Activated B cell treated with CpG ODN at 0.5 μM for 24 hours (primary cell): ENCODE measurements at regions of chr19 and their contacts with region 1.

Region 1: GRCh38 chr19:42132851-42133528 is 744 bp upstream of the POU2F2 start:
- DNase-seq: peak; percentile 97
- ATAC-seq: peak; percentile 27
- H3K4me3 Mint-ChIP-seq: peak overlapping the region; percentile 95
- H3K27ac Mint-ChIP-seq: peak overlapping the region; percentile 90
- H3K4me1 Mint-ChIP-seq: peaks cover 60% of the 10 kb centered on the region
- H3K27me3 Mint-ChIP-seq: no peaks in the 10 kb centered on the region
- CTCF ChIP-seq: no peak

Region 2: DNA sequence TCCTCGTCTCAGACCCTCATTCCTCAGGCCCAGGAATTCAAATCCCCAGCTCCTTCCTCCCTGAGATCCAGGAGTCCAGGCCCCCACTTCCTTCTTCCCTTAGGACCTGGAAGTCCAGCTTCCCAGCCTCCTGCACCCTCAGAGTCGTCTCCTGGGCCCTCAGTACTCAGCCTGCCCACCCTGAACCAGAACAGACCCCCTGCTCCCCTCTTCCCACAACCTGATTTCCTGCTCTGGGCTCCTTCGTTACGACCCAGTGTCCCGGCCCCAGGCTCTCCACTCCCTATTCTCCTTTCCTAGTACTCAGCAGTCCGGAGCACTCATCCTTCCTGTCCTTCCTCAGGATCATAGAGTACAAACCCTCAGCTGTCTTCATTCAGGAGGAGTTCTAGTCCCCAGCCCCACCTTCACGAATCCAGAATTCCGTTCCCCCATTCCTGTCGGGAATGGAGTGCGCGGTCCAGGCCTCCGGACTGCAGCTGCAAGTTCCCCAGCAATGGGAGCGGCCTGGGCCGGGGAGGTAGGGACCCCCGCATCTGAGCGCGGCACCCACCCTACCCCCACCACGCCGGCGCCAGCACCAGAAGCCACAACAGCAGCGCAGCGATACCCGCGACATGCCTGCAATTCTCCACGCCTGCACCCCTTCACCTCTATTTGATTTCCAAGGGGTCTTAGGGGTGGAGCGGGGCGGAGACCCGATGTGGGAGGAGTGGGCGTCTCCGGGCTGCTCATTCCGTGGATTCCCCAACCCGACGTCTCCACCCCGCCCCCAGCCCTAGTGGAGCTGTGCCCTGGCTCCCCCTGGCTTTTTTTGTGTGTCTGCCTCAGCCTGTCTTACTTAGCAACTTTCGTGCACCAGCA is 1321.3 kb before region 1 on chr19:
- CTCF ChIA-PET with region 1: no interaction called
- POLR2A ChIA-PET with region 1: no interaction called
- intact Hi-C with region 1: no loop called
- DNase-seq: no peak
- ATAC-seq: no peak
- H3K4me3 Mint-ChIP-seq: peak overlapping the region; percentile 92
- H3K27ac Mint-ChIP-seq: no peak overlapping the region
- H3K4me1 Mint-ChIP-seq: peaks cover 50% of the 10 kb centered on the region
- H3K27me3 Mint-ChIP-seq: no peaks in the 10 kb centered on the region
- CTCF ChIP-seq: no peak

Region 3: GRCh38 chr19:42048992-42049391 is 84.0 kb before region 1 on chr19:
- CTCF ChIA-PET with region 1: no interaction called
- POLR2A ChIA-PET with region 1: no interaction called
- intact Hi-C with region 1: no loop called
- DNase-seq: no peak
- ATAC-seq: no peak
- H3K4me3 Mint-ChIP-seq: peak overlapping the region; percentile 12
- H3K27ac Mint-ChIP-seq: no peak overlapping the region
- H3K4me1 Mint-ChIP-seq: peaks cover 7% of the 10 kb centered on the region
- H3K27me3 Mint-ChIP-seq: peaks cover 9% of the 10 kb centered on the region
- CTCF ChIP-seq: no peak

Region 4: DNA sequence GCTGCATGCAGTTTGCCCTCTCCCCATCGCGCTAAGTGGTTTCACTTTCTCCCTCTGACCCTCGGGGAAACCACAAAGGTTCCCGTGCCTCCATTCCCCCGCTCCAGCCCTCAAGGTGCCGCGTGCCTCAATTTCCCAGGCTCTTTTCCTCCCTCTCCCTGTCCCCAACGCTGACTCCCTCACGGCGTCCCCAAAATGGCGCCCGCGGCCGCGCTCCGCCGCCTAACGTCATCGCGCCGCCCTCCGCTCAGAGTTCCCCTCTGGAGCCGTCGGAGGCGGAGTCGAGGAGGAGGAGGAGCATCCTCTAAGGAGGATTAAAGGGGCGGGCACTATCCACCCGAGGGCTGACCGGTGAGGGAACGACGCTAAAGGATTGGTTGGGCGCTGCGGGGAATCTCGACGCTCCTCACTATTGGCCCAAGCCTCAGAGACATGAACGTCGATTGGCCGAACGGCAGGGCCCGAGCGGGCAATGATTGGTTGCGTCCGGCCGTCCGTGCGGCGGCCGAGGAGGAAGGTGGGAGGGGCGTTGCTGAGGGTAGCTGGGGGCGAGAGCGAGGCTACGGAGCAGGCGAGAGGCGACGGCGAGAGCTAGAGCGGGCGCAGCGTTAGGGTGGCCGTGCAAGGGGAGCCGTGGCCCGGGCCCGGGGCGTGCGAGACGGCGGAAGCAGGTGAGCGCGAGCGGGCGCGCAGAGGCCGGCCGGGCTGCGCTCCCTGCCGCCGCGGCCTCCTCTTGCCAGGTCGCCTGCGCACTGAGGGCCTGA is 57.2 kb before region 1 on chr19 and contains the start of gene ZNF574:
- CTCF ChIA-PET with region 1: no interaction called
- POLR2A ChIA-PET with region 1: interaction called, 10 read pairs
- intact Hi-C with region 1: loop called (anchors 1 kb)
- DNase-seq: peak; percentile 91
- ATAC-seq: peak; percentile 95
- H3K4me3 Mint-ChIP-seq: peak within 1 kb of the TSS; percentile 93
- H3K27ac Mint-ChIP-seq: peak within 1 kb of the TSS; percentile 99
- H3K4me1 Mint-ChIP-seq: peaks cover 37% of the 10 kb centered on the region
- H3K27me3 Mint-ChIP-seq: no peaks in the 10 kb centered on the region
- CTCF ChIP-seq: no peak
- total RNA-seq, gene ZNF574: 27.7 and 29.6 TPM in 2 replicates

Region 5: DNA sequence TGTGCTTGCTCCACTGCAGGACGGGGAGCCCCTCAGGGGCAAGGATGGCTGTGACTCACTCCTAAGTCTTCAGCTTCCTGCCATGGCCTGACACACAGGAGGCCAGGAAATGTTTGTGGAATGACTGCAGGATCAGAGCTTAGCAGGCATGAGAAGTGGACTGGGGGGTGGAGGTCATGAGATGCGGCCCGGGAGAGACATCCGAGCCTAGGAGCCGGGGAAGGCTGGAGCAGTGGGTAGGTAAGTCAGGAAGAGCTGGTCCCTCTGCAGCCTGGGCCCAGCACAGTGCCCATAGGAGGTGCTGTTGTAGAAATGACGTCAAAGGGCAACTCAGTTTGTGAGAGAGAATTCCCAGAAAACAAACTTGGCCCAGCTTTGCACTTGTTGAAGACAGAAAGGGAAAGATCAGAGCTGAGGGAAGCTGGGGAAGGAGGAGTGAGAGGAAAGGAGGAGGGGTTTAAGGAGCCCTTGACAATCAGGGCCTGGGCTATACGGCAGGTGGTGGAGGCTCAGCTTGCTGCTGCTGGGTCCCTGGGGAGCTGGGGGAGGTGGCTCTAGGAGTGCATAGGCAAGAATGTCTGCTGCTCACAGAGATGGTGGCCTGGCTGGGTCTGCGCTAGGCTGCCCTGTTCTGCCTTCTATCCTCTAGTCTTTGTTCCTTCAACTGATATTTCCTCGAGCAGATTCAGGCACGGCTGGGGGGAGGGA is 19.2 kb before region 1 on chr19:
- CTCF ChIA-PET with region 1: interaction called, 426 read pairs
- POLR2A ChIA-PET with region 1: interaction called, 1,230 read pairs
- intact Hi-C with region 1: loop called (anchors 1 kb)
- DNase-seq: peak; percentile 68
- ATAC-seq: peak; percentile 77
- H3K4me3 Mint-ChIP-seq: peak overlapping the region; percentile 83
- H3K27ac Mint-ChIP-seq: peak overlapping the region; percentile 96
- H3K4me1 Mint-ChIP-seq: peaks cover 95% of the 10 kb centered on the region
- H3K27me3 Mint-ChIP-seq: no peaks in the 10 kb centered on the region
- CTCF ChIP-seq: no peak

Region 6: DNA sequence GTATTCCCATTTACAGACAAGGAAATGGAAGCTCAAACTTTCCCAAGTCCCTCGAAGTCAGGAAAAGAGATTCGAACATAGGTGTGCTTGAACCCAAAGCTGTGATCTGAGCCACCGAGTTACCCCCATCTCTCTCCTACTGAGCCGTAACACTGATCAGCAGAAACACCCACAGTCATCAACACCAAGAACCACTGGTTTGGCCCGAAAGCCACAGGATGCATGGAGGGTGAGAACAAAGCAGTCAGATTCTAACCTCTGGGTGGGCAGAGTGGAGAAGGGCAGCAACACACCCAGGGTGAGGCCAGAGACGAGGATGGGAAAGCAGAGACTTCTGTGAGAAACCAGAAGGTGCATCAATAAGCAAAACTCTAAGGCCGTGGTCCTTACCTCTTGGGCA is 27.0 kb after region 1 on chr19:
- CTCF ChIA-PET with region 1: no interaction called
- POLR2A ChIA-PET with region 1: no interaction called
- intact Hi-C with region 1: no loop called
- DNase-seq: no peak
- ATAC-seq: no peak
- H3K4me3 Mint-ChIP-seq: no peak overlapping the region
- H3K27ac Mint-ChIP-seq: no peak overlapping the region
- H3K4me1 Mint-ChIP-seq: peaks cover 11% of the 10 kb centered on the region
- H3K27me3 Mint-ChIP-seq: peaks cover 8% of the 10 kb centered on the region
- CTCF ChIP-seq: no peak

Region 7: GRCh38 chr19:42184401-42184861 is 51.4 kb after region 1 on chr19:
- CTCF ChIA-PET with region 1: interaction called, 28 read pairs
- POLR2A ChIA-PET with region 1: interaction called, 7 read pairs
- intact Hi-C with region 1: loop called (anchors 1 kb)
- DNase-seq: peak; percentile 61
- ATAC-seq: peak; percentile 83
- H3K4me3 Mint-ChIP-seq: peak overlapping the region; percentile 2
- H3K27ac Mint-ChIP-seq: peak overlapping the region; percentile 30
- H3K4me1 Mint-ChIP-seq: peaks cover 37% of the 10 kb centered on the region
- H3K27me3 Mint-ChIP-seq: peaks cover 13% of the 10 kb centered on the region
- CTCF ChIP-seq: no peak

Region 8: GRCh38 chr19:42244347-42245220 is 111.6 kb after region 1 on chr19:
- CTCF ChIA-PET with region 1: interaction called, 11 read pairs
- POLR2A ChIA-PET with region 1: interaction called, 21 read pairs
- intact Hi-C with region 1: loop called (anchors 1 kb)
- DNase-seq: peak; percentile 81
- ATAC-seq: peak; percentile 40
- H3K4me3 Mint-ChIP-seq: peak overlapping the region; percentile 99
- H3K27ac Mint-ChIP-seq: peak overlapping the region; percentile 99
- H3K4me1 Mint-ChIP-seq: peaks cover 50% of the 10 kb centered on the region
- H3K27me3 Mint-ChIP-seq: no peaks in the 10 kb centered on the region
- CTCF ChIP-seq: no peak

Region 9: DNA sequence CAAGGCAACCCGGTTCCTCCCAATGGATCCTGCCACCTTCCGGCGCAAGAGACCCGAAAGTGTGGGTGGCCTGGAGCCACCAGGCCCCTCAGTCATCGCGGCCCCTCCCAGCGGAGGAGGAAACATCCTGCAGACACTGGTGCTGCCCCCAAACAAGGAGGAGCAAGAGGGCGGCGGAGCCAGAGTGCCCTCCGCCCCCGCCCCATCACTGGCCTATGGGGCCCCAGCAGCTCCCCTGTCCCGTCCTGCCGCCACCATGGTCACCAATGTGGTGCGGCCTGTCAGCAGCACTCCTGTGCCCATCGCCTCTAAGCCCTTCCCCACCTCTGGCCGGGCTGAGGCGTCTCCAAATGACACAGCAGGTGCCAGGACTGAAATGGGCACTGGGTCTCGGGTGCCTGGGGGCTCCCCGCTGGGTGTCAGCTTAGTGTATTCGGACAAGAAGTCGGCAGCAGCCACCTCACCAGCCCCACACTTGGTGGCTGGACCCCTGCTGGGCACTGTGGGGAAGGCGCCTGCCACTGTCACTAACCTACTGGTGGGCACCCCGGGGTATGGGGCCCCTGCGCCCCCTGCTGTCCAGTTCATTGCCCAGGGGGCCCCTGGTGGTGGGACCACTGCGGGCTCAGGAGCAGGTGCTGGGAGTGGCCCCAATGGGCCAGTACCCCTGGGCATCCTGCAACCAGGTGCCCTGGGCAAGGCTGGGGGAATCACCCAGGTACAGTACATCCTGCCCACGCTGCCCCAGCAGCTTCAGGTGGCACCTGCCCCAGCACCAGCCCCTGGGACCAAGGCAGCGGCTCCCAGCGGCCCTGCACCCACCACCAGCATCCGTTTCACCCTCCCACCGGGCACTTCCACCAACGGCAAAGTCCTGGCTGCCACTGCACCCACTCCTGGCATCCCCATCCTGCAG is 157.8 kb after region 1 on chr19:
- CTCF ChIA-PET with region 1: interaction called, 26 read pairs
- POLR2A ChIA-PET with region 1: interaction called, 3 read pairs
- intact Hi-C with region 1: loop called (anchors 1 kb)
- DNase-seq: peak; percentile 64
- ATAC-seq: peak; percentile 84
- H3K4me3 Mint-ChIP-seq: no peak overlapping the region
- H3K27ac Mint-ChIP-seq: no peak overlapping the region
- H3K4me1 Mint-ChIP-seq: peaks cover 16% of the 10 kb centered on the region
- H3K27me3 Mint-ChIP-seq: no peaks in the 10 kb centered on the region
- CTCF ChIP-seq: no peak

Region 10: GRCh38 chr19:42401365-42402303 is 268.6 kb after region 1 on chr19:
- CTCF ChIA-PET with region 1: no interaction called
- POLR2A ChIA-PET with region 1: interaction called, 3 read pairs
- intact Hi-C with region 1: loop called (anchors 1 kb)
- DNase-seq: peak; percentile 74
- ATAC-seq: peak; percentile 49
- H3K4me3 Mint-ChIP-seq: peak overlapping the region; percentile 80
- H3K27ac Mint-ChIP-seq: peak overlapping the region; percentile 72
- H3K4me1 Mint-ChIP-seq: peaks cover 46% of the 10 kb centered on the region
- H3K27me3 Mint-ChIP-seq: no peaks in the 10 kb centered on the region
- CTCF ChIP-seq: no peak

Region 11: DNA sequence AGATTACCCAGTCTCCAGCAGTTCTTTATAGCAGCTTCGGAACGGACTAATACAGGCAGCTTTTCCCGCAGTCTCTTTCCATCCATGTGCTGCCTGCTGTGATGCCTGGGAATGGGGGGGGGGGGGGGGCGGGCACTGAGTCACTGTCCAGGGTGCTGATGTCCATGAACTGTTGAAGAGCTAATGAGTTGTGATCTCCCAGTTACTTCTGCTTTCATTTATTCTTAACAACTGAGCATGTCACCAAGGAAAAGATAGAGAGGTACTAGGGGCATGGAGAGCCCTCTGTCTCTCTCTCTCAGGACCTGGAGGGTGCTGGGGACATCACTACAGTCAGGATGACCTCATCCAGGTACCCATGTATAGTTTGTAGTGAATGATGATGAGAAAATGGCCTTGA is 415.6 kb after region 1 on chr19:
- CTCF ChIA-PET with region 1: no interaction called
- POLR2A ChIA-PET with region 1: no interaction called
- intact Hi-C with region 1: no loop called
- DNase-seq: no peak
- ATAC-seq: no peak
- H3K4me3 Mint-ChIP-seq: no peak overlapping the region
- H3K27ac Mint-ChIP-seq: no peak overlapping the region
- H3K4me1 Mint-ChIP-seq: peaks cover under 1% of the 10 kb centered on the region
- H3K27me3 Mint-ChIP-seq: peaks cover 22% of the 10 kb centered on the region
- CTCF ChIP-seq: no peak